Activated CD4-positive, alpha-beta T cell treated with anti-CD3 and anti-CD28 coated beads, Interleukin-2, amount 10 ng/mL, durations not matched to agents 7 days and 5 days (primary cell): ENCODE measurements at regions of chr17 and their contacts with region 1.

Region 1: DNA sequence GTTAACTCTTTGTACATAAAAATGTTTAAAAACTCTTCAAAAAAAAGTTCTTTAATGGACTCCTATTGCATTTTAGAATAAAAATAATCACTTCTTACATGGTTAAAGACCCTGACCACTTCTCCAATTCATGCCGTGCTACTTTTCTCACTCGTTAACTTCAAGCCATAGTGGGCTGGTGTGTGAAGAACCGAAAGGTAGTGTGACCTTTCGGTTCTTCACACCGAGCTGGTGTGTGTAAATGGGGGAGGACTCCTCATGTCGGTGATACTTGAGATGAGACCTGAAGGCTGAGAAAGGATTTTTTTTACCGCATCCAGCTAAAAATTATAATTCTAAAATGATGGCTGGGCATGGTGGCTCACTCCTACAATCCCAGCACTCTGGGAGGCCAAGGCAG is 22.1 kb downstream of the RFFL start:
- DNase-seq: no peak
- H3K4me3 Mint-ChIP-seq: no peak overlapping the region
- H3K27ac Mint-ChIP-seq: no peak overlapping the region
- H3K4me1 Mint-ChIP-seq: peaks cover 30% of the 10 kb centered on the region
- H3K27me3 Mint-ChIP-seq: no peaks in the 10 kb centered on the region

Region 2: GRCh38 chr17:34886831-34887230 is 154.6 kb before region 1 on chr17:
- CTCF ChIA-PET with region 1: no interaction called
- POLR2A ChIA-PET with region 1: no interaction called
- DNase-seq: no peak
- H3K4me3 Mint-ChIP-seq: no peak overlapping the region
- H3K27ac Mint-ChIP-seq: no peak overlapping the region
- H3K4me1 Mint-ChIP-seq: no peaks in the 10 kb centered on the region
- H3K27me3 Mint-ChIP-seq: peaks cover 28% of the 10 kb centered on the region

Region 3: GRCh38 chr17:35022536-35023063 is 18.8 kb before region 1 on chr17:
- CTCF ChIA-PET with region 1: interaction called, 10 read pairs
- POLR2A ChIA-PET with region 1: no interaction called
- DNase-seq: peak; percentile 81
- H3K4me3 Mint-ChIP-seq: peak overlapping the region; percentile 62
- H3K27ac Mint-ChIP-seq: peak overlapping the region; percentile 96
- H3K4me1 Mint-ChIP-seq: peaks cover 51% of the 10 kb centered on the region
- H3K27me3 Mint-ChIP-seq: no peaks in the 10 kb centered on the region